ENCODE measurements at regions of chr3 and their contacts with region 1.

Region 1: GRCh38 chr3:139745831-139746230 is 68.1 kb upstream of the NMNAT3 start:
- DNase-seq: peak; percentile 40

Region 2: DNA sequence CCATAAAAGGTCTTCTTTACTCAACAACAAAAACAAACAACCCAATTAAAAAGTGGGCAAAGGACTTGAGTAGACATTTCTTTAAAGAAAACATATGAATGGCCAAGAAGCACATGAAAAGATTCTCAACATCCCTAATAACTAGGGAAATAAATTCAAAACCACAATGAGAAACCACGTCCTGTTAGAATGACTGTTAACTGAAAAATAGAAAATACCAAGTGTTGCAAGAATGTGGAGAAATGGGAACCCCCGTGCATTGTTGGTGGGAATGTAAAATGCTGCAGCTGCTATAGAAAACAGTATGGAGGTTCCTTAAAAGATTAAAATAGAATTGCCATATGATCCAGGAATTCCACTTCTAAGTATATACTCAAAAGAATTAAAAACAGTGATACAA is 102.8 kb before region 1 on chr3:
- in situ Hi-C with region 1: no loop called
- DNase-seq: no peak

Region 3: GRCh38 chr3:139870000-139870675 is 124.3 kb after region 1 on chr3:
- in situ Hi-C with region 1: loop called (anchors 25 kb)
- DNase-seq: no peak

Measured in SK-MEL-5 (cell line).